Ovary (tissue), 10 donors: ENCODE measurements at regions of chr1 and their contacts with region 1.

Region 1: DNA sequence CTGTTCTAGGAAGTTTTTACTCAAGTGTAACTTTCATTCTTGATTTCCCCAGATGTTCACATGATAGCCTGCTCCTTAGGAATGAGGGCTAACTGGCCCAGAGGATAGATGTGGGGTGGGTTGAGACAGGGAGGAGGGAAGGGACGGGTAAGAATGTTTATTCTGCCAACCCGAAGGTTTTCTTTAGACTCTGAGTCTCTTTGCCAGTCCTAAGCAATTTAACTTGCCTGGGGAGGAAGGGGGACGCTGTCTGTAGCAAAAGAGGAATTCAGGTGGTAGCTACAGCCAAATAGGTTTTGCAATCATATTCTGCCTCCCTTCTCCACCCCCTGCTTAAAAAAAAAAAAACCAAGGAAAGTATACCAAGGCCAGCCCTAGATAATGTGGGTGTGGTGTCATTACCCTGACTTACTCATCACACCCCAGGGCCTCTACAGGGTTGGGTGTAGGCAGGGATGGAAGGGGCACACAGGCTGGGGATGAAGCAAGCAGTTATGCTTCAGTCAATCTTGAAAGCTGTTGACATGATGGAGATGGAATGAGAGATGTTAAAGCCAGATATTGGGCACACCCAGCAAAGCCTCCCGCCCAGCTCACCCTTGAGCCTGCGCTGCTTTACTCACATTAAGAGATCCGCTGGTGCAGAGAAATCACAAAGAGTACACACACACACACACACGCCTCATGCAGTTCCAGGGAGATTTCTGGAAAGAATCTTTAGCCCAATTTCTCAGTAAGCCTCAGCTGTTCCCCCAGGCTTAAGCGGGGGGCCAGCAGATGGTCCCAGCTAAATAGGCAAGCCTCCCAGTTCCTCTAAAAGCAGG is 59.9 kb downstream of the PLXNA2 start:
- DNase-seq: peak in 2 of 5 donors; percentile 46 to 70
- H3K4me3 ChIP-seq: no peak overlapping the region
- H3K27ac ChIP-seq: peak overlapping the region in 1 of 2 donors; percentile 52
- H3K4me1 ChIP-seq: peaks cover 32% of the 10 kb centered on the region
- H3K27me3 ChIP-seq: no peaks in the 10 kb centered on the region
- CTCF ChIP-seq: no peak
- EP300 ChIP-seq: no peak
- POLR2A ChIP-seq: no peak

Region 2: DNA sequence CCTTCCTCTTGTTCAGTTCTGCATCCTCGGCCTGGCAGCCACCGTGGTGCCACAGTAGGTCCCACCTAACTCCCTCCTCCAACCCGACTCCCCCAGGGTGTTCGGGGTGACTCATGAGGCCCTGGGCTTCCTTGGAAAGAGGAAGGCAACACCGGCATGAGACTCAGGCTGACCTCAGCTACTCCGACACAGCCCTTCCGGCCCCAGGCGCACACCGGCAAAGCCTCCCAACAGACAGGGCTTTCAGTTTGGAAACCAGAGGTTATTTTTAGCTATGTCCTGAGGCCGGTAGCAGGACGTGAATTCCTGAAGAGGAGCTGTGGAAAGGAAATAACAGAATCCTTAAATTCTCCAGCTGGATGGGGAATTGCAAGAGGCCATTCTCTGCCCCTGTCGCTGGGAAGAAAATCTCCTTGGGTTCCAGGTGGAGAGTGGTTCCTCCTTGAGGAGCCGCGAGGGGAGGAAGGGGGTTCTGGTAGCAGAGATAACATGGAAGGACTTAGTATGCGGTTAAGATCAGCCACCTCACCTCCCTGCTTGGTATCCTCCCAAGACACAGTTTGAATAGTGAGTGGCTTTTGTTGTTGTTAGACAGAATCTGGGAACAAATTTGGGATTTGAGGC is 35.5 kb after region 1 on chr1:
- intact Hi-C with region 1: loop called in 2 of 4 experiments (anchors 5 kb)
- DNase-seq: peak; percentile 64 to 73 (median 70)
- H3K4me3 ChIP-seq: no peak overlapping the region
- H3K27ac ChIP-seq: peak overlapping the region; percentile 22 to 66
- H3K4me1 ChIP-seq: peaks cover 35% of the 10 kb centered on the region
- H3K27me3 ChIP-seq: no peaks in the 10 kb centered on the region
- CTCF ChIP-seq: no peak
- EP300 ChIP-seq: no peak
- POLR2A ChIP-seq: no peak

Region 3: DNA sequence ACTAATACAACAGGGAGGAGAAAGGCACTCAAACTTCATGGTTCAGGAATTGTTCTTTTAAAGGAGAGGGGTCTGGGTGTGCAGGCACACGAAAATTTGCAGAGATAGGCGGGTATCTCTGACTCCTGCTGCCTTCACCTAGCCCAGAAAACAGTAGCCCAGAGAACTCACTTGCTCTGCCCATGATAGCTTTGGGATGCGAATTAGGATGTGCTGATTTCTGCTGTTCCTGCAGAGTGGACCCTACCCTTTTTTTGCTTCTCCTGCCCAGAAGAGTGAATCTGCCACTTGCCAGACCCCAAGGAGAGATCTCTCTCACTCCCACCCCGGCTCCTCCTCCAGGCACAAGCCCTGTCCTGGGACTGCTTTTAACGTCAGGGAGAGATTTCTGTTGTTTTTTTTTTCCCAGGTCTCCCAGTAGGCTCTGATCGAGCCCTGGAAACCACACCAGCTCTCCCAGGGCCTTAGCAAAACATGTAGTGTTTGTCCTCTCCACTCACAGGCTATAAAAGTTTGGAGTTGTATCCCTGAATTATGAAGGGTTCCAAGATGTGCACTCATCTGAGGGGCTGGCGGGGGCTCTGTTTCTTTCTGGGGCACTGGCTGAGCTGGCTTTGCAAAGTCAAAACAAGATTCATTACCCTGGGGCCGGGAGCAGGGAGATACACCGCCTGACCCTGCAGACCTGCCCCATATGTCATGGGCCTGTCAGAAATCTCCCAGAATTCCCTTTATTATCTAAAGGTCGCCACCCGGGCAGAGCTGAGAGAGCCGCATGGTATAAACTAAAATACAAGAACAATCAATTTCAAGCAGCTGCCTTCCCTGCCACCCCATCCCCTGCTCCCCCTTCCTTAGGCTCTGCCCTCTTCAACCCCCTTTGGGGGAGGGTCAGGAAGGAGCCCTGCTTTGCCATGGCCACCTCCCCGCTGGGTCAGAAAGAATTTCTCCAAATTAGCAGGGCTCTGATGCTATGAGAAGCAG is 41.9 kb after region 1 on chr1:
- intact Hi-C with region 1: loop called in 1 of 4 experiments (anchors 5 kb)
- DNase-seq: peak in 4 of 5 donors; percentile 60 to 79 (median 73)
- H3K4me3 ChIP-seq: no peak overlapping the region
- H3K27ac ChIP-seq: peak overlapping the region; percentile 16 to 79
- H3K4me1 ChIP-seq: peaks cover 48% of the 10 kb centered on the region
- H3K27me3 ChIP-seq: no peaks in the 10 kb centered on the region
- CTCF ChIP-seq: no peak
- EP300 ChIP-seq: no peak
- POLR2A ChIP-seq: no peak

Region 4: GRCh38 chr1:208431721-208432120 is 247.4 kb after region 1 on chr1:
- intact Hi-C with region 1: no loop called
- DNase-seq: no peak
- H3K4me3 ChIP-seq: no peak overlapping the region
- H3K27ac ChIP-seq: no peak overlapping the region
- H3K4me1 ChIP-seq: no peaks in the 10 kb centered on the region
- H3K27me3 ChIP-seq: no peaks in the 10 kb centered on the region
- CTCF ChIP-seq: no peak
- EP300 ChIP-seq: no peak
- POLR2A ChIP-seq: no peak